ENCODE measurements at regions of chr12 and their contacts with region 1.

Region 1: DNA sequence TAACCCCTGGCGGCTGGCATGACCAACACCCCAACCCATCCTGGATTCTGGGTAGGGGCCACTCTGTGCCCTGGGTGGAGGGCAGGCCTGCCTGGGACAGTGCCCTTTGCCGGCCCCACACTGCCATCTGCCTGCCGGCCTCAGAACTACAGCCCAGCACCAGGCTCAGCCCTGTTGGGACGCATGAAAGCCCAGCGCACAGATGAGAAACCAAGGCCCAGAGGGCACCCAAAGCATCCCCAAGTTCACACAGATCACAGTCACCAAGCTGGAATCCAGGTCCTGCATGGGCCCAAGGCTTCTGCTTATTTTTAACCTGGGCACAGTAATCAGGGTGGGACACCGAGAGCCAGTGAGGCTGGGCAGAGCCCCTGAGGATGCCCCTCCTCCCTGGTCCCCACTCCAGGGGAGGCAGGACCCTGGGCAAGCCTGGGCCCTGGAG is 26.2 kb downstream of the RFLNA start:
- DNase-seq: peak; percentile 68 to 89 (median 89)
- ATAC-seq: peak; percentile 75 to 82
- H3K4me3 ChIP-seq: no peak overlapping the region
- H3K27ac ChIP-seq: no peak overlapping the region
- H3K4me1 ChIP-seq: no peaks in the 10 kb centered on the region
- H3K27me3 ChIP-seq: no peaks in the 10 kb centered on the region

Region 2: GRCh38 chr12:124053851-124054250 is 267.2 kb before region 1 on chr12:
- intact Hi-C with region 1: loop called (anchors 5 kb)
- DNase-seq: peak; percentile 51 to 83 (median 68)
- ATAC-seq: peak; percentile 93 to 94
- H3K4me3 ChIP-seq: no peak overlapping the region
- H3K27ac ChIP-seq: no peak overlapping the region
- H3K4me1 ChIP-seq: no peaks in the 10 kb centered on the region
- H3K27me3 ChIP-seq: no peaks in the 10 kb centered on the region

Region 3: DNA sequence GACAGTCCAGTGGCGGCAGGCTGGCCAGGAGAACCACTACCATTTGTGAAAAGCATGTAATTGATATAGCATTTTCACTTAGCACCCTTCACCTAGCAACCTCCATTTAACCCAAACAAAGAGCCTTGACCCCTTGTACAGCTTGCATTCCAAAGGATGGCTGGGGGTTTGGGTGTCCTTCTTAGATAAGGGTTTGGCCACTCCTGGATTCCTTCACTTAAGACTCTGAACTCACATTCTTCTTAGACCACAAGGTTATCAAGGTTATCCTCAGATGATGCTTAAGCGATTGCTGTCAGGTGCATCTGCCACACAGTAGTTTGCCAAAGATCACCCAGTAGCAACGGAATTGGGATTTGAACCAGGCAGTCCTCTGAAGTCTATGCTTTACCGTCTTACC is 245.2 kb before region 1 on chr12:
- intact Hi-C with region 1: no loop called
- DNase-seq: no peak
- ATAC-seq: no peak
- H3K4me3 ChIP-seq: no peak overlapping the region
- H3K27ac ChIP-seq: no peak overlapping the region
- H3K4me1 ChIP-seq: no peaks in the 10 kb centered on the region
- H3K27me3 ChIP-seq: no peaks in the 10 kb centered on the region

Region 4: GRCh38 chr12:124289634-124290598 is 31.1 kb before region 1 on chr12:
- intact Hi-C with region 1: no loop called
- DNase-seq: peak in 1 of 3 donors; percentile 55
- ATAC-seq: peak; percentile 55 to 77
- H3K4me3 ChIP-seq: no peak overlapping the region
- H3K27ac ChIP-seq: no peak overlapping the region
- H3K4me1 ChIP-seq: no peaks in the 10 kb centered on the region
- H3K27me3 ChIP-seq: no peaks in the 10 kb centered on the region

Measured in right cardiac atrium (tissue), 5 donors.